Naive thymus-derived CD4-positive, alpha-beta T cell (primary cell): ENCODE measurements at regions of chr2 and their contacts with region 1.

Region 1: DNA sequence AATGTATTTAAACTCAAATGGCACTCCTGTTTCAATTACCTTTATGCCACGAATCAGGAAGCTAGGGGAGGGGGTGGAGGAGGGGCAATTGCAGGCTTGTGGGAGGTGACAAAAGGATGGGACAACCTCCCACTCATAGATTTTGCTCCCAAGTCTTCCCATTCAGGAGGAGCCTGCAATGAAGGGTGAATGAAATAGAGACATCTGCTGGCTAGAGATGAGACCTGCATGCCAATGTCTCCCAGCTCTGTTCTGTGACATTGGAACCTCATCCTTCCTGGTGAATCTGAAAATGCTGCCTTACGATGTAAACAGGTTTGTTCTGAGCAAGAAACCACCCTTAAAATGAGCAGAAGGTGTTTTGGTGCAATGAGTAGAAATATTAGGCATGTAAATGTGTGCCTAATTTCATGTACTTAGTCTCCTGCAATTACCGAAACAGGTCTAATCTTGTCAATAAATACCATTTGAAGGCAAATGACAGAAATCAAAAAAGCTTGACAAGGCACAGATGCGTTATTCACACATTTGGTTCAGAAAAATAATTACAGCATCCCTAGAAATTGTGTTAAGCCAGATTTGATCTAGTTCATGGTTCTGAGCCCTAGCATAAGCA is 2.7 kb upstream of the PID1 start:
- DNase-seq: no peak
- ATAC-seq: peak; percentile 55
- H3K4me3 ChIP-seq: no peak overlapping the region
- H3K4me3 Mint-ChIP-seq: no peak overlapping the region
- H3K27ac ChIP-seq: no peak overlapping the region
- H3K27ac Mint-ChIP-seq: no peak overlapping the region
- H3K4me1 ChIP-seq: no peaks in the 10 kb centered on the region
- H3K4me1 Mint-ChIP-seq: no peaks in the 10 kb centered on the region
- H3K27me3 ChIP-seq: no peaks in the 10 kb centered on the region
- H3K27me3 Mint-ChIP-seq: peaks cover 22 to 39% (median 25%) of the 10 kb centered on the region in 5 donors

Region 2: DNA sequence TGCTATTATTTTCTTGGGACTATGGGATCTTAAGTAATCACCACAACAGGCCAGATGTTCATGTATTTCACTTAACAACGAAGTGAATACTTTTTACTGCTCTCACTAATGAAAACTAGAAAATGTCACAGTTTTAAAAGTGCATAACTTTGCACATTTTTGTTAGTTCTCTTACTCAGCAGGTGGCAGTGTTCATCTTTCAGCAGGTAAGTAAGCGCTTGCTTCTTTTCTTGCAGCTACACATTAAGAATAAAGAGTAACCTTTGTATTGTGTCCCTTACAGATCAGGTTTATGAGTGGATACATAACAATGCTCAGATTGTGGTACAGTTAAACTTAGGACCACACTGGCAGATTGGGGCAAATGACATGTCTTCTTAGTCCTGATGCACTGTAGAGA is 1341.4 kb before region 1 on chr2:
- CTCF ChIA-PET with region 1: no interaction called
- POLR2A ChIA-PET with region 1: no interaction called
- intact Hi-C with region 1: no loop called
- DNase-seq: no peak
- ATAC-seq: no peak
- H3K4me3 ChIP-seq: no peak overlapping the region
- H3K4me3 Mint-ChIP-seq: no peak overlapping the region
- H3K27ac ChIP-seq: no peak overlapping the region
- H3K27ac Mint-ChIP-seq: no peak overlapping the region
- H3K4me1 ChIP-seq: no peaks in the 10 kb centered on the region
- H3K4me1 Mint-ChIP-seq: peaks cover 0 to 3% (median 0%) of the 10 kb centered on the region in 7 donors
- H3K27me3 ChIP-seq: no peaks in the 10 kb centered on the region
- H3K27me3 Mint-ChIP-seq: peaks cover 0 to 15% (median 0%) of the 10 kb centered on the region in 5 donors

Region 3: DNA sequence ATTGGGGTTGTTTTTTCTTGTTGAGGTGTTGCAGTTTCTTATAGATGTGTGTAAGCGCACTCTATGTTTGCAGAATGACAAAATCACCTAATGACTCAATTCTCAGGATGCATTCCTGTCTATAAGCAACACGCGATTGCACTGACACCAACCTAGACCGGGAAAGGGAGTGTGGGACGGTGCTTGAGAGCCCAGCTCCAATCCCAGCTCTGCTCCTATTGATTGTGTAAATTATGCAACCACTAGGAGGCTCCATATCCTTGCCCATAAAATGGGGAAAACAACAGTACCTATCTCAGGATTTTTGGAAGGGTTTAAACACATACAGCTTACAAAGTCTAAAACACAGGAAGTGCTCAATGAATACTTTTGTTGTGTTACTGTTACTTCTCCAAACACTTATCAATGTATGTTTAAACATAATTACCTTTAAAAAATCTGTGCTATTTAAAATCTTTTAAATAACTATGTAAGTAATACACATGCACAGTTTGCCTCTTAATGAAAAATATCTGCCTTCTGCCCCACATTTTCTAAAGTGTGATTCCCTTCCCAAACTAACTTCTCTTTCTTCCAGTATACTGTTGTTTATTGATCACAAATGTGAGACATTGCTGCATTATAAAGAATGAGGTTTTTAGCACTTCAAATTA is 1224.9 kb before region 1 on chr2:
- CTCF ChIA-PET with region 1: no interaction called
- POLR2A ChIA-PET with region 1: no interaction called
- intact Hi-C with region 1: loop called in 1 of 2 experiments (anchors 5 kb)
- DNase-seq: no peak
- ATAC-seq: no peak
- H3K4me3 ChIP-seq: no peak overlapping the region
- H3K4me3 Mint-ChIP-seq: no peak overlapping the region
- H3K27ac ChIP-seq: no peak overlapping the region
- H3K27ac Mint-ChIP-seq: no peak overlapping the region
- H3K4me1 ChIP-seq: no peaks in the 10 kb centered on the region
- H3K4me1 Mint-ChIP-seq: no peaks in the 10 kb centered on the region
- H3K27me3 ChIP-seq: no peaks in the 10 kb centered on the region
- H3K27me3 Mint-ChIP-seq: no peaks in the 10 kb centered on the region

Region 4: GRCh38 chr2:229205704-229206103 is 68.1 kb before region 1 on chr2:
- CTCF ChIA-PET with region 1: no interaction called
- POLR2A ChIA-PET with region 1: no interaction called
- intact Hi-C with region 1: no loop called
- DNase-seq: no peak
- ATAC-seq: no peak
- H3K4me3 ChIP-seq: no peak overlapping the region
- H3K4me3 Mint-ChIP-seq: no peak overlapping the region
- H3K27ac ChIP-seq: no peak overlapping the region
- H3K27ac Mint-ChIP-seq: no peak overlapping the region
- H3K4me1 ChIP-seq: no peaks in the 10 kb centered on the region
- H3K4me1 Mint-ChIP-seq: no peaks in the 10 kb centered on the region
- H3K27me3 ChIP-seq: no peaks in the 10 kb centered on the region
- H3K27me3 Mint-ChIP-seq: peaks cover 0 to 4% (median 0%) of the 10 kb centered on the region in 5 donors